Calu3 (cell line): ENCODE measurements at regions of chr4 and their contacts with region 1.

Region 1: GRCh38 chr4:52529983-52530382 is 129.1 kb downstream of the USP46 start:
- DNase-seq: no peak
- H3K4me3 Mint-ChIP-seq: no peak overlapping the region
- H3K27ac Mint-ChIP-seq: no peak overlapping the region
- H3K4me1 Mint-ChIP-seq: no peaks in the 10 kb centered on the region
- H3K27me3 Mint-ChIP-seq: peaks cover 13% of the 10 kb centered on the region
- CTCF ChIP-seq: no peak

Region 2: DNA sequence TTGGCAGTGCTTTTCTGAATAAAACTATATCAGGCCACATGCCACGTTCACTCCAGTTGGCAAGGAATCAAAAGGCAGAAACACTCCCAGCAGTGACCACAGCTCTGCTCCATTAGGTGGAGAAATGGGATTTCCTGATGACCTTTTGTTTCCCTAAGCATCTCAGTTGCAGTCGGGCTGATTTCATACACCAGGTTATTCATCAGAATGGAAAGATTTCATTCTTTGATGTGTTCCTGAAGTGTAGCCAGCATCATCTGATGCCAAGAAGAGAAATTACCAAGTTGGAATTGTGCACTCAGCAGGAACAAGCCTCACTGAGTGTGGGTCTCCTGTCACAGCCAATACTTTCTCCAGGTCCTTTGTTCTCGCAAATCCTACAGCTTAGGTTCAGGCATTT is 285.1 kb before region 1 on chr4:
- CTCF ChIA-PET with region 1: no interaction called
- intact Hi-C with region 1: loop called (anchors 10 kb)
- DNase-seq: no peak
- H3K4me3 Mint-ChIP-seq: no peak overlapping the region
- H3K27ac Mint-ChIP-seq: no peak overlapping the region
- H3K4me1 Mint-ChIP-seq: no peaks in the 10 kb centered on the region
- H3K27me3 Mint-ChIP-seq: peaks cover 30% of the 10 kb centered on the region
- CTCF ChIP-seq: no peak

Region 3: DNA sequence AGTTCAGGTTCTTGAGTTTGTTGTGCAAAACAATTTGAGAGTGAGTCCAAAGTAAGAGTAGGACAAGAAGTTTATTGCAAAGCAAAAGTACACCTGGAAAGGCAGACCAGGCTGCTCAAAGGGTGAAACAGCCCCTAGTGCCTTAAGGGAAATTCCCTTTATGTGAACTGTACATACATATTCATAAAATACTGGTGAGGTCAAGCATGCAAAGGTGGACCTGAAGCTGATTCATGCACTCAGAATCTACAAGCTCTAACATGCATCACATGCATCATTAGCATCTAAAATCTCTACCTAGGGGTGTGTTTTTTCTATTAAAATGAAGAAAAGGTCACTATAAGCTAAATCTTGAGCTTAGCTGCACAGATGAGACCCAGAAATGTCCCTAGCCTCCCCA is 212.0 kb before region 1 on chr4:
- CTCF ChIA-PET with region 1: no interaction called
- intact Hi-C with region 1: no loop called
- DNase-seq: no peak
- H3K4me3 Mint-ChIP-seq: no peak overlapping the region
- H3K27ac Mint-ChIP-seq: no peak overlapping the region
- H3K4me1 Mint-ChIP-seq: peaks cover 6% of the 10 kb centered on the region
- H3K27me3 Mint-ChIP-seq: no peaks in the 10 kb centered on the region
- CTCF ChIP-seq: no peak

Region 4: DNA sequence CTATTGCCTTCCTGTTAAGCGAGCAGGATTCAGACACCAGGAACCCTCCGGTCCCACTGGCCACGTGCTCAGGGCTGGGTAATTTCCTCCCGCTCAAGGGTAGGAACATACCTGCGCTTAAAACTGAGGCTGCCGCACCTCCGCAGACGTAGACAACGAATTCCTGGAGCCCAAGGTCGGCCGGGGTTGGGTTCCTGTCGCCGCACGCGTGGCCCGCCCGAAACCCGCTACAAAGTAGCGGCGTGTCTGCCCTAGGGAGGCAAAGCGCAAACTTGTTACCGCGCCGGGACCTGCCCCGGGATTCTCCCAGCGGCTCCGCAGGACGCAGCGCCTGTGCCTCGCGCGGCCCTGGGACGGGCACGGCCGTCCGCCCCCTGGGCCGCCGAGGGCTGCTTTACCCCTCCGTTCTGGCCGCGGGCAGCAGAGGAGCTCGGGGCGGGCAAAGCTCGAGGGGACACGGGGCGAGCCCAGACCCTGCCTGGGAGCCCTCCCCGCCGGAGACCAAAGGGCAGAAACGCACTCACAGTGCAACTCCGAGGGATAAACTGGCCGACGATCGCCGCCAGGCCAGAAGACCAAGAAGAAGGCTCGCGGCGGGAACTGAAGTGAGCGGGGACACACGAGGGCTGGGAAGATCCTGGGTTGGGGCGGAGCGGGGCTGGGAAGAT is 221.0 kb after region 1 on chr4 and contains the start of gene ERVMER34-1:
- CTCF ChIA-PET with region 1: no interaction called
- intact Hi-C with region 1: no loop called
- DNase-seq: peak; percentile 20
- H3K4me3 Mint-ChIP-seq: peak within 1 kb of the TSS; percentile 75
- H3K27ac Mint-ChIP-seq: no peak within 1 kb of the TSS
- H3K4me1 Mint-ChIP-seq: no peaks in the 10 kb centered on the region
- H3K27me3 Mint-ChIP-seq: no peaks in the 10 kb centered on the region
- CTCF ChIP-seq: no peak
- total RNA-seq, gene ERVMER34-1: 2.5 and 3.2 TPM in 2 replicates